Gastrocnemius medialis (tissue), 4 donors: ENCODE measurements at regions of chr5 and their contacts with region 1.

Region 1: DNA sequence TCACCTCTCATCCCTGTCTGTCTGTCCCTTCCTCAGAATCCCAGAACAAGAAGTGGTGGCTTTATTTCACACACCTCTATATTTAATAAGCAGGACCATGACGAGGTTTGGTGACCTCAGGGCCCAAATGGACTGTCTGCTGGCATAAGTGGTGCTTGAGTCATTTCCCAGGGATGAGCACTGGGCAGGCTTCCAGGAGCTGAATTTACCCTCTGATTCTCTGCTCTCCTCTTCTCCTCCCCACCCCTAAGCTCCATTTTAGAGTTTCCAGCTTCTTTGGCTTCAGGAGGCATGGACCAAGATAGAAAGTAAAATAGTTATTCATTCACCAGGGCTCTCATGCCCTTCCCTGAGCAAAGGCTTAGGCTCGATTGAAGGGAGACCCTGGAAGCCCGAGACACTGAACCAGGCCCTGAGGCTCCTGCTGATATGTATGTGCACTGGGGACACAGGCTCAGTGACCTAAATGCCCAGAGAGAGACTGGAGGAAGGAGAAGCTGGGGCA is 69.1 kb downstream of the PPARGC1B start:
- DNase-seq: peak; percentile 79 to 93
- ATAC-seq: peak; percentile 67 to 74
- H3K4me3 ChIP-seq: peak overlapping the region in 3 of 4 donors; percentile 12 to 45 (median 41)
- H3K27ac ChIP-seq: peak overlapping the region; percentile 94 to 99 (median 98)
- H3K4me1 ChIP-seq: peaks cover 96% of the 10 kb centered on the region in 2 donors
- H3K27me3 ChIP-seq: no peaks in the 10 kb centered on the region
- CTCF ChIP-seq: no peak
- POLR2A ChIP-seq: peak; percentile 41 to 53

Region 2: GRCh38 chr5:149749481-149750365 is 49.4 kb before region 1 on chr5:
- in situ Hi-C with region 1: no loop called
- intact Hi-C with region 1: loop called (anchors 2 kb)
- DNase-seq: no peak
- ATAC-seq: peak; percentile 25 to 34
- H3K4me3 ChIP-seq: no peak overlapping the region
- H3K27ac ChIP-seq: peak overlapping the region; percentile 84 to 99 (median 92)
- H3K4me1 ChIP-seq: peaks cover 47 to 58% of the 10 kb centered on the region in 2 donors
- H3K27me3 ChIP-seq: no peaks in the 10 kb centered on the region
- CTCF ChIP-seq: no peak
- POLR2A ChIP-seq: no peak

Region 3: DNA sequence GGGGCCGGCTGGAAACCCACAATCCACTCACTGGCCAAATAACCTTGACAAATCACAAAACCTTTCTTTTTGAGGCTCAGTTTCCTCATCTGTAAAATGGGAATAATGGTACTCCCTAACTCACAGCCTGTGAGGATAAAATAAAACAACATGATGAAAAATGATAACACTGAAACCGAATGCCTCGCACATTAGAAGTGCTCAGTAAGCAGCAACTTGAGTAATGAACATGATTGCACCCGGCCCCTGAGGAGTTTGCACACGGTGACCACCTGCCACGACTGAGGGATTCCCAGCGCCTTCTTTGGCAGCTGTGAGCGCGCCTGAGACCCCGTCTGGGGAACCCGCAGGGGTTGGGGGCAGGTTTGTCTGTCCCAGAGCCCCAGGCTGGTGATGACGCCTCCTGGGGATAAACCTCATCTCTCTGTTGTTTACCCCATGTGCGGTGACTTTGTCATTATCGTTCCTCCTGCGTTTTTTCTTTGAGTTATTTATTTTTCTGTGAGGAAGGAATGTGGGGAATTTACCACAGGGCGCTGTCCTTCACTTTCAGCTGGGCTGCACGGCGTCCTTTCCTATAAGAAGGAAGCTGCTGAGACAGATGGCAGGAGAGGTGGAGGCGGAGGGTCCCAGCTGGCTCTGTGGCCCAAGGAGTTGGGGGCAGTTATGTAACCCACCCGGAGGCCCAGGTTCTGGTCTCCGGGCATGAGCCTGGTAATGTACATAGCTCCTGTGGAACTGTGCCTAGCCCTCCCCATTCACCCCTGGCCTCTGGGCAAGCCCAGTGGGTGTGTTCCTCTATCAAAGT is 838.3 kb after region 1 on chr5:
- in situ Hi-C with region 1: no loop called
- intact Hi-C with region 1: loop called (anchors 10 kb)
- DNase-seq: no peak
- ATAC-seq: peak in 1 of 2 donors; percentile 9
- H3K4me3 ChIP-seq: no peak overlapping the region
- H3K27ac ChIP-seq: peak overlapping the region; percentile 96 to 100 (median 100)
- H3K4me1 ChIP-seq: peaks cover 82 to 94% of the 10 kb centered on the region in 2 donors
- H3K27me3 ChIP-seq: no peaks in the 10 kb centered on the region
- CTCF ChIP-seq: no peak
- POLR2A ChIP-seq: no peak